Activated B cell treated with CpG ODN at 0.5 μM for 24 hours (primary cell): ENCODE measurements at regions of chr3 and their contacts with region 1.

Region 1: DNA sequence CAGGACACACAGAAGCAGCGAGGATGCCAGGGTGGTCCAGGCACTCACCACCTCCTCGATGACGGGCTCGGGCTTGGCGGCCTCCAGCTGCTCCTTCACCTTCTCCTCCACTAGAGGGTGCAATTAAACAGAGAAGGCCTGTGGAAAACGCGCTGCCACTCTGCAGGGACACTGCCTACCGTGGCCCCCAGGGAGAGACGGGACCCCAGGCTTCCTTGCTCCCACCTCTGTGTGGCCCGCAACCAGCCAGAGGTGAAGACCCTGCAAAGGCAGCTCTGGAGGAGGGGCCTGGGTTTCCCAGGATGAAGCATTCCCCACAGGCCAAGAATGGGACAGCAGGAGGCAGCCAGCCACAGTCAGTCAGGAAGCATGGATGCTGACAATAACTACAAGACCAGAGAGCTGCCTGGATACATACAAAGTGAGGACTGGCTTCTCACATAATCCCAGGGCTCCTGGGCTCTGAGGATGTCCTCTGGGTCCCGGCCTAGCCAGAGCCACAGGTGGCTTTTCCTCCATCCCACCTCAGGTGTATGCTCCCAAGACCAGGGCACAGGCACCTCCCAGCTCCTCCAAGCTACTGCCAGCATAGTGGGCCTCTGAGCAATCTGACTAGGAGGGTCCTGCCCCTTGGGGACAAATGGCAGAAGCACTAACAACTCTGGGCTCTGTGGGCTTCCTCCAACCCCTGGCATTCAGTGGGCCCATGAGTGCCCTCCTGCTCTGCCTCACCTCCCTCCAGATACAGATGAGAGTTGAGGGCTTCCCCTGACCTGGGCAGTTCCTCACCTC is 46.2 kb downstream of the PTH1R start:
- DNase-seq: no peak
- ATAC-seq: no peak
- H3K4me3 Mint-ChIP-seq: peak overlapping the region; percentile 19
- H3K27ac Mint-ChIP-seq: peak overlapping the region; percentile 68
- H3K4me1 Mint-ChIP-seq: peaks cover 59% of the 10 kb centered on the region
- H3K27me3 Mint-ChIP-seq: no peaks in the 10 kb centered on the region
- CTCF ChIP-seq: no peak

Region 2: GRCh38 chr3:46953234-46954010 is 29.7 kb after region 1 on chr3:
- CTCF ChIA-PET with region 1: interaction called, 6 read pairs
- POLR2A ChIA-PET with region 1: interaction called, 8 read pairs
- intact Hi-C with region 1: loop called (anchors 1 kb)
- DNase-seq: no peak
- ATAC-seq: peak; percentile 79
- H3K4me3 Mint-ChIP-seq: peak overlapping the region; percentile 64
- H3K27ac Mint-ChIP-seq: peak overlapping the region; percentile 78
- H3K4me1 Mint-ChIP-seq: peaks cover 88% of the 10 kb centered on the region
- H3K27me3 Mint-ChIP-seq: no peaks in the 10 kb centered on the region
- CTCF ChIP-seq: no peak

Region 3: GRCh38 chr3:47193871-47194859 is 270.4 kb after region 1 on chr3:
- CTCF ChIA-PET with region 1: no interaction called
- POLR2A ChIA-PET with region 1: no interaction called
- intact Hi-C with region 1: no loop called
- DNase-seq: no peak
- ATAC-seq: no peak
- H3K4me3 Mint-ChIP-seq: no peak overlapping the region
- H3K27ac Mint-ChIP-seq: peak overlapping the region; percentile 53
- H3K4me1 Mint-ChIP-seq: no peaks in the 10 kb centered on the region
- H3K27me3 Mint-ChIP-seq: no peaks in the 10 kb centered on the region
- CTCF ChIP-seq: no peak

Region 4: GRCh38 chr3:47225310-47225906 is 301.7 kb after region 1 on chr3:
- CTCF ChIA-PET with region 1: no interaction called
- POLR2A ChIA-PET with region 1: no interaction called
- intact Hi-C with region 1: no loop called
- DNase-seq: no peak
- ATAC-seq: peak; percentile 54
- H3K4me3 Mint-ChIP-seq: no peak overlapping the region
- H3K27ac Mint-ChIP-seq: no peak overlapping the region
- H3K4me1 Mint-ChIP-seq: peaks cover 40% of the 10 kb centered on the region
- H3K27me3 Mint-ChIP-seq: no peaks in the 10 kb centered on the region
- CTCF ChIP-seq: no peak

Region 5: DNA sequence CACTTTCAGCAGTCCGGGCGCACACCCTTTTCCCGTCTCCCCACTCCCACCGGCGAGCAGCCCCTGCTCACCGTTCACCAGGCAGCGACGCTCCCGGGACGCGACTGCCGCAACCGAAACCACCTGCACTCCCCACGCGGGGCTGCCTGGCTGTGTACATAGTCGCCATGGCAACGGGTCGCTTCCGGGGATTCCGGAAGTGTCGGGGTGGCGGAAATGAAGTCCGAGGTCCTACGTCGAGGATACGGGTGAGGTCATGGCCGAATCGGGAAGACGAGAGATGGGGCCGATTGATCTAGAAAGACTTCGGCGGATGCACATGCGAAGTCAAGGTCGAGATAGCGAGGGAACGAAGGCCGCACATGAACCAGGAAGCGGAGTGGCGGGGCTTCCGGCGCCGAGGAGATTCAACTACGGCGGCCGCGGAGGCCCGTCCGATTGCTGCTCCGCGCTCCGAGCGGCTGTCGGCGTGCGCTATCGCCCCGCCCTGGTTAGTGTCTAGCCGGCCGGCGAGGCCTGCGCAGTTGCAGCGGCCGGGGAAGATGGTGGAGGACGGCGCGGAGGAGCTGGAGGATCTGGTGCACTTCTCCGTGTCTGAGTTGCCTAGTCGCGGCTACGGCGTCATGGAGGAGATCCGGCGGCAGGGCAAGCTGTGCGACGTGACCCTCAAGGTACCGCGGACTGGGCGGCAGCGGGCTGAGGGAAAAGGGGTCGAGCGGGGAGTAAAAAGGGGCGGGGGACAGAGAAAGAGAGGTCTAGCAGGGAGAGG is 358.9 kb after region 1 on chr3 and contains the starts of genes KIF9 and KLHL18:
- CTCF ChIA-PET with region 1: no interaction called
- POLR2A ChIA-PET with region 1: no interaction called
- intact Hi-C with region 1: loop called (anchors 5 kb)
- DNase-seq: peak; percentile 93
- ATAC-seq: peak; percentile 82
- H3K4me3 Mint-ChIP-seq: peak within 1 kb of the TSS; percentile 100
- H3K27ac Mint-ChIP-seq: peak within 1 kb of the TSS; percentile 99
- H3K4me1 Mint-ChIP-seq: peaks cover 53% of the 10 kb centered on the region
- H3K27me3 Mint-ChIP-seq: no peaks in the 10 kb centered on the region
- CTCF ChIP-seq: no peak
- total RNA-seq, gene KIF9: 2.3 and 2.5 TPM in 2 replicates
- total RNA-seq, gene KLHL18: 36.6 and 38.0 TPM in 2 replicates